H1 (cell line): ENCODE measurements at regions of chr1 and their contacts with region 1.

Region 1: GRCh38 chr1:179809506-179810366 is 66.6 kb downstream of the FAM163A start:
- DNase-seq: peak; percentile 49 to 81
- H3K4me3 ChIP-seq: no peak overlapping the region
- H3K27ac ChIP-seq: no peak overlapping the region
- H3K4me1 ChIP-seq: peaks cover 0 to 4% (median under 1%) of the 10 kb centered on the region in 4 experiments; a peak in 3 of 7 replicates
- H3K27me3 ChIP-seq: peaks cover 0 to 6% (median 3%) of the 10 kb centered on the region in 4 experiments; a peak in 4 of 7 replicates
- CTCF ChIP-seq: peak; percentile 84 to 97 (median 89)
- EP300 ChIP-seq: no peak
- POLR2A ChIP-seq: no peak
- RAD21 ChIP-seq: peak; percentile 82 to 89

Region 2: GRCh38 chr1:179516976-179517705 is 292.6 kb before region 1 on chr1:
- CTCF ChIA-PET with region 1: no interaction called
- POLR2A ChIA-PET with region 1: no interaction called
- DNase-seq: no peak
- H3K4me3 ChIP-seq: no peak overlapping the region
- H3K27ac ChIP-seq: no peak overlapping the region
- H3K4me1 ChIP-seq: peaks cover 0 to 3% (median 0%) of the 10 kb centered on the region in 4 experiments; a peak in 3 of 7 replicates
- H3K27me3 ChIP-seq: no peaks in the 10 kb centered on the region
- CTCF ChIP-seq: no peak
- EP300 ChIP-seq: no peak
- POLR2A ChIP-seq: no peak
- RAD21 ChIP-seq: no peak

Region 3: GRCh38 chr1:179714159-179714558 is 95.6 kb before region 1 on chr1:
- CTCF ChIA-PET with region 1: interaction called, 595 read pairs
- POLR2A ChIA-PET with region 1: no interaction called
- DNase-seq: no peak
- H3K4me3 ChIP-seq: no peak overlapping the region
- H3K27ac ChIP-seq: no peak overlapping the region
- H3K4me1 ChIP-seq: no peaks in the 10 kb centered on the region
- H3K27me3 ChIP-seq: no peaks in the 10 kb centered on the region
- CTCF ChIP-seq: no peak
- EP300 ChIP-seq: no peak
- POLR2A ChIP-seq: no peak
- RAD21 ChIP-seq: no peak

Region 4: GRCh38 chr1:179728271-179728670 is 81.5 kb before region 1 on chr1:
- CTCF ChIA-PET with region 1: interaction called, 52 read pairs
- POLR2A ChIA-PET with region 1: no interaction called
- DNase-seq: no peak
- H3K4me3 ChIP-seq: no peak overlapping the region
- H3K27ac ChIP-seq: no peak overlapping the region
- H3K4me1 ChIP-seq: no peaks in the 10 kb centered on the region
- H3K27me3 ChIP-seq: peaks cover 0 to 1% (median 0%) of the 10 kb centered on the region in 4 experiments; a peak in 1 of 7 replicates
- CTCF ChIP-seq: no peak
- EP300 ChIP-seq: no peak
- POLR2A ChIP-seq: no peak
- RAD21 ChIP-seq: no peak

Region 5: GRCh38 chr1:179770884-179771502 is 38.7 kb before region 1 on chr1:
- CTCF ChIA-PET with region 1: interaction called, 26 read pairs
- POLR2A ChIA-PET with region 1: no interaction called
- DNase-seq: no peak
- H3K4me3 ChIP-seq: no peak overlapping the region
- H3K27ac ChIP-seq: no peak overlapping the region
- H3K4me1 ChIP-seq: no peaks in the 10 kb centered on the region; a peak in 1 of 7 replicates
- H3K27me3 ChIP-seq: peaks cover 0 to 3% (median 0%) of the 10 kb centered on the region in 4 experiments; a peak in 1 of 7 replicates
- CTCF ChIP-seq: no peak
- EP300 ChIP-seq: no peak
- POLR2A ChIP-seq: no peak
- RAD21 ChIP-seq: peak; percentile 12 to 16; a peak in 1 of 4 replicates

Region 6: DNA sequence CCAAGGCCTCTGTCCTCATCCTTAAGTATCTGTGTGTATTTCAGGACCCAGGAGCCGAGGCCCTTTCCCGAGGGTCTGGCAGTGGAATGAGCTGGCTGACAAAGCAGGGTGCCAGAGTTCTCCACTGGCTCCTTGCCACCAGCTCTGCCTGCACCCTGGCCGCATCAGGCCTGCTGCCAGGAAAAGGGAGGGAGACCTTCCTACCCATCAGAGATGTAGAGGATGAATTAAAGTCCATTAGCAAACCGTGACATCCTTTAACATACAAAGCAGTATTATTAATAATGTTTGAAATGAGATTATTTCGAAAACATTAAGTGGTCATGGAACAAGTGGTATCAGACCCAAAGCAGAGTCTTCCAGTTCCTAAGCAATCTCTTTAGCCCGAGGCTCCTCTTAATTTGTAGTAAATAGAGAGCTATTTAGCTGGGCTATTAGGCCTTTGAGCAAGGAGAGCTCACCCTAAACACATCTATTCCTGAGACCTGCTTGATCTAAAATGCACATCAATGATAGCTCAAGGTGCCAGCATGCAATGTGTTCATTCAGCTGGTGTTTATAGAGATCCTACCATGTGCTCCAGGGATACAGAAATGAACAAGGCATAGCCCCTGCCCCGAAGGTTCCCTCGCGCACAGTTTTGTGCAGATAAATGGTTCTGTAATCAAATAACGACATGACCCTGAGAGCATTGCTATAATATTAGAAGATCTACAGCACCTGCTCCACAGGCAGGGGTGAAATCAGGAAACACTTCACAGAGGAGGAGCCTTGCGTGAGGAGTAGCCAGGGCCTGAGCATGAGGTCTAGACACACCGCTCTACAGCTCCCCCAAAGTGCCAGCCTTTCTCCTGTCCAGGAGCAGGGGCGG is 22.7 kb before region 1 on chr1:
- CTCF ChIA-PET with region 1: interaction called, 40 read pairs
- POLR2A ChIA-PET with region 1: interaction called, 3 read pairs
- DNase-seq: no peak
- H3K4me3 ChIP-seq: no peak overlapping the region
- H3K27ac ChIP-seq: no peak overlapping the region
- H3K4me1 ChIP-seq: peaks cover 5 to 15% (median 7%) of the 10 kb centered on the region in 4 experiments; a peak in 4 of 7 replicates
- H3K27me3 ChIP-seq: no peaks in the 10 kb centered on the region
- CTCF ChIP-seq: no peak
- EP300 ChIP-seq: no peak
- POLR2A ChIP-seq: no peak
- RAD21 ChIP-seq: no peak

Region 7: GRCh38 chr1:179840107-179840506 is 30.4 kb after region 1 on chr1:
- CTCF ChIA-PET with region 1: interaction called, 26 read pairs
- POLR2A ChIA-PET with region 1: no interaction called
- DNase-seq: no peak
- H3K4me3 ChIP-seq: no peak overlapping the region
- H3K27ac ChIP-seq: no peak overlapping the region
- H3K4me1 ChIP-seq: no peaks in the 10 kb centered on the region
- H3K27me3 ChIP-seq: no peaks in the 10 kb centered on the region
- CTCF ChIP-seq: no peak
- EP300 ChIP-seq: no peak
- POLR2A ChIP-seq: no peak
- RAD21 ChIP-seq: no peak

Region 8: DNA sequence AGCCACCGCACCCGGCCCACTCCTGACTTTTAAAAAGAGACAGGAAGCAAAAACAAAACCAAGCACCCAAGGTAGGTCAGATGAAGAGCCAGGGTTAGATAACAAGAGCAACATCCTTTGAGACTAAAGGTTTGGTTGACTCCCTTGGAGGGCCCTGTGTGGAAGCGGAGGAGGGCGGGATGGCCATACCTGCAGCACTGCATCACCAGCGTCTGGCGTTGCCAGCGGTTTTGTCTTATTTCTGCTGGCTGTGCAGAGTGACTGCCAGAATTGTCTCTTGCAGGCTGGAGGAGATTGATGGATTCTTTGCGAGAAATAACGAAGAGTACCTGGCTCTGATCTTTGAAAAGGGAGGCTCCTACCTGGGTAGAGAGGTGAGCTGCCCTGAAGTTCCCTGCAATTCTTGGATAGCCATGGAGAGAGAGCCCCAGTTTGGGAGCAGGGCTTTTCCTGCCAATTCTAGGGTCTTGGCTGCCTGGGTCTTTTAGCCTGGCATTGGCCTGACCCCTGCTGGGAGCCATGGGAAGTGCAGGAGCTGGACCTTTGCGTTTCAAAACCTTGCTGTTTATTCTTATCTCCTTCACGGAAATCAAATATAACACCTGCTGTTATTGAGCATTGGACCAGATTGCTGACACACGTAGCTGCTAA is 368.9 kb after region 1 on chr1:
- CTCF ChIA-PET with region 1: interaction called, 20 read pairs
- POLR2A ChIA-PET with region 1: no interaction called
- DNase-seq: peak in 1 of 2 experiments; percentile 93
- H3K4me3 ChIP-seq: no peak overlapping the region
- H3K27ac ChIP-seq: no peak overlapping the region
- H3K4me1 ChIP-seq: no peaks in the 10 kb centered on the region
- H3K27me3 ChIP-seq: no peaks in the 10 kb centered on the region
- CTCF ChIP-seq: peak; percentile 77 to 94 (median 83)
- EP300 ChIP-seq: no peak
- POLR2A ChIP-seq: no peak
- RAD21 ChIP-seq: peak; percentile 90 to 91